Activated CD8-positive, alpha-beta memory T cell treated with anti-CD3 and anti-CD28 coated beads, Interleukin-2, amount 10 ng/mL, durations not matched to agents 7 days and 5 days (primary cell): ENCODE measurements at regions of chr16 and their contacts with region 1.

Region 1: GRCh38 chr16:85420501-85421337 is 192.4 kb upstream of the GSE1 start:
- DNase-seq: peak; percentile 76
- ATAC-seq: peak; percentile 72
- H3K4me3 Mint-ChIP-seq: no peak overlapping the region
- H3K27ac Mint-ChIP-seq: no peak overlapping the region
- H3K4me1 Mint-ChIP-seq: peaks cover 6% of the 10 kb centered on the region
- H3K27me3 Mint-ChIP-seq: no peaks in the 10 kb centered on the region

Region 2: DNA sequence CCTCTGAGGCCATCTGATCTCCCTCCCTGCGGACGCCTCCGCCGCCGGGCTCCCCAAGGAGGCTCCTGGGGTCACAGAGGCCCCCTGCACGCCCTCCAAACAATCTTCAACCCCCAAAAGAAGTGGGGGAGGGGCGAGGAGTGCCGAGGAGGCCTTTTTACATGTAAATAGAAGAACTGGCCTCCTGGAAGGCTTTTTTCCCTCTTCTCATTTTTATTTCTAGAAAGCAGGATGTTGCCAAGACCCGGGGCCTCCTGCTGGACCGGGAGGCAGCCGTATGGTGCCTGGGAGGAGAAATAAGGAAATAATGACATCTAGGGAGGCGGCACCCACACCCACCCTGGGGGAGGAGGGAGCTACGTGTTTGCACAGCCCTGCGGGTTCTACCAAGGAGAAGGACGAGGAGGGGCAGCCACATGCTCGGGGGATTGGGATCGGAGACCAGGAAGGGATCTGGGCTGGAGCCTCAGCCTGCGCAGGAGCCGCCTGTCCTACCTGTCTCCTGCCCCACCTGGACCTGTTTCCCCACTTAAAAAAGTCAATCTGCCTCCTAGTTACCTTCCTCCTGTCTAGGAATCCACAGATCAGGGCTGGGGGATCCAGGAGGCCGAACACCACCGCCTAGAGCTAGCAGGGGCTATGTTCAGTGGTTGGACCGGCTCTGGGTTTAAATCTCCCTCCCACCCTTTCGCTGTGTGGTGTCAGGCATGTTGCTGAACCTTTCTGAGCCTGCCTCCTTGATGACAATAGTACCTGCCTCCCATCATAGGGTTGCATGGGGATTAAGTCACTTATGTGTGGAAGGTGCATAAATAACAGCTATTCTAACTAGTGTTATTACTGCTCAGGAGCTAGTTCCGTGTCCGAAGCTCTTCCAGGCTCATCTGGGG is 16.7 kb after region 1 on chr16:
- CTCF ChIA-PET with region 1: interaction called, 11 read pairs
- DNase-seq: no peak
- ATAC-seq: no peak
- H3K4me3 Mint-ChIP-seq: no peak overlapping the region
- H3K27ac Mint-ChIP-seq: no peak overlapping the region
- H3K4me1 Mint-ChIP-seq: no peaks in the 10 kb centered on the region
- H3K27me3 Mint-ChIP-seq: no peaks in the 10 kb centered on the region